ENCODE measurements at regions of chr5 and their contacts with region 1.

Region 1: DNA sequence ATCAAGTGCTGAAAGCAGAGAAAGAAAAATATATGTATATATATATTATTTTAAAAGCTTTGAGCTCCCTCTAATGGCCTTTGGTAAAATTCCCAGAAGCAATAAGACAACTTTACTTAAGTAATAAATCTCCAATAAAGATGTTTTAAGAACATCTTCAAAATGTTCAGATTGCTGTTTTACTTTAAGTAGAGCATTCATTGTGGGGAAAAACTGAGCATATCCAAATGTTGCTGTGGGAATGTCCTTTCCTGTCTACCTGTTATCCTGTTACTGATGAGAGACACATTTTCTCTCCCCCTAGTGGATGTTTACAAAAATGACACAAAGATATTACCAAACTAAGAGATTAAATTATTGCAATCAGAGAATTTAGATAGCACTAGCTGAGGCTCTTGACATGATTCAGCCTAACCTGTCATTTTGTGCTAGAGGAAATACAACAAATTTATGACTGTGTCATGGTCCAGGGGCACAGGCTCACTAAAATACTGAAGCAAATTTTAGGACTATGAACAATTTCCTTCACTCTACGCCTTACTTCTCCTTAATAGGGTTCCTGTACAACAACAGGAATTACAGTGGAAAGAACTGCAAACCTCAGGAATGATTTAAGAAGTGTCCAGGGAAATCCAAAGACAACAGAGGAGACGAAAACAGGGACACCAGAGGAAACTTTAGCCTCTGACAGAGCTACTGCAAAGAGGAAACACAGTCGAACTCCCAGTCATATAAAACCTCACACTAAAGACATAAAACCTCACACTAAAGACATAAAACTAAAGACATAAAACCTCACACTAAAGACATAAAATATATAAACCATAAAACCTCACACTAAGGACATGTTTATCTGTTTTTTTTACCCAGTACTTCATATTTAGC is 24.3 kb upstream of the PRRC1 start:
- DNase-seq: no peak
- H3K4me3 Mint-ChIP-seq: no peak overlapping the region
- H3K27ac Mint-ChIP-seq: no peak overlapping the region
- H3K4me1 Mint-ChIP-seq: no peaks in the 10 kb centered on the region
- H3K27me3 Mint-ChIP-seq: peaks cover 48% of the 10 kb centered on the region

Region 2: DNA sequence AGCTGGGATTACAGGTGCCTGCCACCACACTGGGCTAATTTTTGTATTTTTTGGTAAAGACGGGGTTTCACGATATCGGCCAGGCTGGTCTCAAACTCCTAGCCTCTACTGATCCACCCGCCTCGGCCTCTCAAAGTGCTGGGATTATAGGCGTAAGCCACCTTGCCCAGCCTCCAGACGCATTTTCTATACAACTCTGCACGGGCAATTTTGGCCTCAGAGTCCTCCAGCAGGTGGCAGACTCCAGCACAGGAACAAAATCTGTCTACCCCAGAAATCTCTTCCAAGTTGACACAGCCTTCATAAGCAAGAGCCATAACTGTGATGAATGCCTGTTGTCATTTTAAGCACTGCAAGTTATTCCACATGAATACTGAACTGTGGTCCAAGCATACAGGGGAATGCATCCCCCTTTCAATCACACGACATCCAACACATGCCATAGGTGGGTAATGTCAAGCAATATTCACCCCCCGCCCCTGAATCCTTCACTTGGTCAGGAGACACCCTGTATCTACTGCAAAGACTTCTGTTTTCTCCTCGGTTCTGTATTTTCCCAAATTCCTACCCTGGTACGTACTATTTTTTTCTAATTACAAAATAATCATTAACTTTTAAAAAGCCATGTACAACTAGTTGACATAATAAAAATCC is 948.9 kb before region 1 on chr5:
- intact Hi-C with region 1: loop called (anchors 2 kb)
- DNase-seq: peak; percentile 74
- H3K4me3 Mint-ChIP-seq: no peak overlapping the region
- H3K27ac Mint-ChIP-seq: no peak overlapping the region
- H3K4me1 Mint-ChIP-seq: no peaks in the 10 kb centered on the region
- H3K27me3 Mint-ChIP-seq: peaks cover 2% of the 10 kb centered on the region

Region 3: DNA sequence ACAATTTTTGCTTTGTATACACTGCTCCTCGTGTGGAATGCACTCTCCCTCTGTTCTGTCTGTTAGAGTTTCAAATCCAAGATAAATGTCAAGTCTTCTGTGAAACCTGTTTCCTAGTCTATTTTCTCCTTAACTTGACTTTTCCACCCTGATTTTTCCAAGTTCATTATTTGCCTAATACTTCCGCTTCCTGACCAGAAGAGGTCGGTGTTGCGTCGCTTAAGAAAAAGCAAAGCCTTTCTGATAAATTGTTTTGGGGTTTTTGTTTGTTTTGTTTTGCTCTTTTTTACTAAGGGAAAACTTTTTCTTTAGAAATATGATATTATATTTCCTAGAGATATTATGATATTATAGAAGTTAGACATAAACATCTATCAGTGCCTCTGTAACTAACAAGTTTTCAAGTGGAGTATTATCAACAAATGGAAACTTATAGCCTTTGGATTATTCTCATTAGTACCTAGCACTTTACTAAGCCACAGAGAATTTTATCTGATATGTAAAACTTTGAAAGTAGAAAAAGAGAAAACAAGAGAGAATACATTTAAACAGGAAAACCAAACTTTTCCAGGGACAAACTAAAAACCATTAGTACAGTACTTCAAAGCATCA is 836.6 kb before region 1 on chr5:
- intact Hi-C with region 1: loop called (anchors 1 kb)
- DNase-seq: peak; percentile 73
- H3K4me3 Mint-ChIP-seq: no peak overlapping the region
- H3K27ac Mint-ChIP-seq: no peak overlapping the region
- H3K4me1 Mint-ChIP-seq: peaks cover 6% of the 10 kb centered on the region
- H3K27me3 Mint-ChIP-seq: peaks cover 10% of the 10 kb centered on the region

Region 4: GRCh38 chr5:127313847-127314473 is 179.1 kb before region 1 on chr5:
- intact Hi-C with region 1: loop called (anchors 10 kb)
- DNase-seq: peak; percentile 90
- H3K4me3 Mint-ChIP-seq: no peak overlapping the region
- H3K27ac Mint-ChIP-seq: no peak overlapping the region
- H3K4me1 Mint-ChIP-seq: no peaks in the 10 kb centered on the region
- H3K27me3 Mint-ChIP-seq: peaks cover 22% of the 10 kb centered on the region

Region 5: GRCh38 chr5:127572930-127573329 is 79.8 kb after region 1 on chr5:
- intact Hi-C with region 1: no loop called
- DNase-seq: no peak
- H3K4me3 Mint-ChIP-seq: no peak overlapping the region
- H3K27ac Mint-ChIP-seq: no peak overlapping the region
- H3K4me1 Mint-ChIP-seq: peaks cover 6% of the 10 kb centered on the region
- H3K27me3 Mint-ChIP-seq: peaks cover 12% of the 10 kb centered on the region

Measured in activated CD4-positive, alpha-beta T cell treated with anti-CD3 and anti-CD28 coated beads, Interleukin-2, amount 10 ng/mL, durations not matched to agents 24 days and 14 days (primary cell).